ENCODE measurements at regions of chr1 and their contacts with region 1.

Region 1: GRCh38 chr1:1507305-1507704 is 4.7 kb upstream of the ATAD3A start:
- DNase-seq: no peak
- H3K4me3 ChIP-seq: no peak overlapping the region
- H3K27ac ChIP-seq: no peak overlapping the region
- H3K4me1 ChIP-seq: peaks cover 2% of the 10 kb centered on the region
- H3K27me3 ChIP-seq: no peaks in the 10 kb centered on the region
- CTCF ChIP-seq: no peak
- EP300 ChIP-seq: no peak
- POLR2A ChIP-seq: no peak

Region 2: GRCh38 chr1:1318131-1318652 is 189.1 kb before region 1 on chr1:
- intact Hi-C with region 1: loop called in 1 of 4 experiments (anchors 10 kb)
- DNase-seq: peak; percentile 89 to 96 (median 94)
- H3K4me3 ChIP-seq: no peak overlapping the region
- H3K27ac ChIP-seq: peak overlapping the region; percentile 43 to 51
- H3K4me1 ChIP-seq: peaks cover 6% of the 10 kb centered on the region
- H3K27me3 ChIP-seq: no peaks in the 10 kb centered on the region
- CTCF ChIP-seq: no peak
- EP300 ChIP-seq: no peak
- POLR2A ChIP-seq: no peak

Region 3: DNA sequence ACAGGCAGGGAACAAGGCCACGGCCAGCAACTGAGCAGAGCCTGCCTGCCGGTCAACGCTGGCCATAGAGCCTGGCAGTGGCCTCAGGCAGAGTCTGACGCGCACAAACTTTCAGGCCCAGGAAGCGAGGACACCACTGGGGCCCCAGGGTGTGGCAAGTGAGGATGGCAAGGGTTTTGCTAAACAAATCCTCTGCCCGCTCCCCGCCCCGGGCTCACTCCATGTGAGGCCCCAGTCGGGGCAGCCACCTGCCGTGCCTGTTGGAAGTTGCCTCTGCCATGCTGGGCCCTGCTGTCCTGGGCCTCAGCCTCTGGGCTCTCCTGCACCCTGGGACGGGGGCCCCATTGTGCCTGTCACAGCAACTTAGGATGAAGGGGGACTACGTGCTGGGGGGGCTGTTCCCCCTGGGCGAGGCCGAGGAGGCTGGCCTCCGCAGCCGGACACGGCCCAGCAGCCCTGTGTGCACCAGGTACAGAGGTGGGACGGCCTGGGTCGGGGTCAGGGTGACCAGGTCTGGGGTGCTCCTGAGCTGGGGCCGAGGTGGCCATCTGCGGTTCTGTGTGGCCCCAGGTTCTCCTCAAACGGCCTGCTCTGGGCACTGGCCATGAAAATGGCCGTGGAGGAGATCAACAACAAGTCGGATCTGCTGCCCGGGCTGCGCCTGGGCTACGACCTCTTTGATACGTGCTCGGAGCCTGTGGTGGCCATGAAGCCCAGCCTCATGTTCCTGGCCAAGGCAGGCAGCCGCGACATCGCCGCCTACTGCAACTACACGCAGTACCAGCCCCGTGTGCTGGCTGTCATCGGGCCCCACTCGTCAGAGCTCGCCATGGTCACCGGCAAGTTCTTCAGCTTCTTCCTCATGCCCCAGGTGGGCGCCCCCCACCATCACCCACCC is 176.0 kb before region 1 on chr1 and contains the start of gene TAS1R3:
- intact Hi-C with region 1: no loop called
- DNase-seq: no peak
- H3K4me3 ChIP-seq: no peak within 1 kb of the TSS
- H3K27ac ChIP-seq: no peak within 1 kb of the TSS
- H3K4me1 ChIP-seq: no peaks in the 10 kb centered on the region
- H3K27me3 ChIP-seq: no peaks in the 10 kb centered on the region
- CTCF ChIP-seq: no peak
- EP300 ChIP-seq: no peak
- POLR2A ChIP-seq: no peak
- total RNA-seq, gene TAS1R3: 0.07 to 0.40 (median 0.23) TPM in 6 of 7 donors, not detected in the other

Region 4: GRCh38 chr1:1374929-1375662 is 132.2 kb before region 1 on chr1 and contains the start of gene AURKAIP1:
- intact Hi-C with region 1: loop called in 1 of 4 experiments (anchors 10 kb)
- DNase-seq: peak; percentile 97 to 99 (median 98)
- H3K4me3 ChIP-seq: peak within 1 kb of the TSS; percentile 100
- H3K27ac ChIP-seq: peak within 1 kb of the TSS; percentile 87 to 88
- H3K4me1 ChIP-seq: peaks cover 7% of the 10 kb centered on the region
- H3K27me3 ChIP-seq: no peaks in the 10 kb centered on the region
- CTCF ChIP-seq: peak in 2 of 3 donors; percentile 51 to 63
- EP300 ChIP-seq: peak; percentile 87
- POLR2A ChIP-seq: peak; percentile 32
- total RNA-seq, gene AURKAIP1: 63.7 to 94.0 (median 73.2) TPM